H1 (cell line): ENCODE measurements at regions of chr6 and their contacts with region 1.

Region 1: GRCh38 chr6:43211955-43212354 is 17.3 kb downstream of the DNPH1 start:
- DNase-seq: no peak
- H3K4me3 ChIP-seq: no peak overlapping the region
- H3K27ac ChIP-seq: no peak overlapping the region
- H3K4me1 ChIP-seq: no peaks in the 10 kb centered on the region; a peak in 1 of 7 replicates
- H3K27me3 ChIP-seq: no peaks in the 10 kb centered on the region
- CTCF ChIP-seq: peak in 1 of 3 experiments; percentile 43; a peak in 1 of 4 replicates
- EP300 ChIP-seq: no peak
- POLR2A ChIP-seq: no peak
- RAD21 ChIP-seq: peak; percentile 27 to 42; a peak in 2 of 4 replicates

Region 2: DNA sequence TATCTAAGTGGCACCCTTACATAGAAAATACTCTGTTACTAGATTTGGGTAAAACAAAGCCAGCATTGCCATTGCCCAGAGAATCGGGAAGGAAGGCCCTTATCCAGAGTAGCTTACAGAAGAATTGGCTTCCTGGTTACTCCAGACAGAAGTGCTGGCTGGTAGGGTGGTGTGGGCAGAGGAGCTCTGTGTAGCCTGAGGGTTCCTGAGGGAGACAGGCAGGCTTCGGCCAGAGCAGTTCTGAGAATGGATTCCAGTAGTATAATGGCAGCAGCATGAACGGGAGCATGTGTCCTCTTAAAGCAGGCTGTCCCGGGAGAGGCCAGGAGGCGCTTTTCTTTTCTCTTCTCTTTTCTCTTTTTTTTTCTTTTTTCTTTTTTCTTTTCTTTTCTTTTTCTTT is 18.0 kb before region 1 on chr6:
- CTCF ChIA-PET with region 1: interaction called, 10 read pairs
- POLR2A ChIA-PET with region 1: interaction called, 4 read pairs
- DNase-seq: no peak
- H3K4me3 ChIP-seq: no peak overlapping the region
- H3K27ac ChIP-seq: no peak overlapping the region
- H3K4me1 ChIP-seq: no peaks in the 10 kb centered on the region
- H3K27me3 ChIP-seq: no peaks in the 10 kb centered on the region
- CTCF ChIP-seq: no peak
- EP300 ChIP-seq: no peak
- POLR2A ChIP-seq: no peak
- RAD21 ChIP-seq: no peak

Region 3: DNA sequence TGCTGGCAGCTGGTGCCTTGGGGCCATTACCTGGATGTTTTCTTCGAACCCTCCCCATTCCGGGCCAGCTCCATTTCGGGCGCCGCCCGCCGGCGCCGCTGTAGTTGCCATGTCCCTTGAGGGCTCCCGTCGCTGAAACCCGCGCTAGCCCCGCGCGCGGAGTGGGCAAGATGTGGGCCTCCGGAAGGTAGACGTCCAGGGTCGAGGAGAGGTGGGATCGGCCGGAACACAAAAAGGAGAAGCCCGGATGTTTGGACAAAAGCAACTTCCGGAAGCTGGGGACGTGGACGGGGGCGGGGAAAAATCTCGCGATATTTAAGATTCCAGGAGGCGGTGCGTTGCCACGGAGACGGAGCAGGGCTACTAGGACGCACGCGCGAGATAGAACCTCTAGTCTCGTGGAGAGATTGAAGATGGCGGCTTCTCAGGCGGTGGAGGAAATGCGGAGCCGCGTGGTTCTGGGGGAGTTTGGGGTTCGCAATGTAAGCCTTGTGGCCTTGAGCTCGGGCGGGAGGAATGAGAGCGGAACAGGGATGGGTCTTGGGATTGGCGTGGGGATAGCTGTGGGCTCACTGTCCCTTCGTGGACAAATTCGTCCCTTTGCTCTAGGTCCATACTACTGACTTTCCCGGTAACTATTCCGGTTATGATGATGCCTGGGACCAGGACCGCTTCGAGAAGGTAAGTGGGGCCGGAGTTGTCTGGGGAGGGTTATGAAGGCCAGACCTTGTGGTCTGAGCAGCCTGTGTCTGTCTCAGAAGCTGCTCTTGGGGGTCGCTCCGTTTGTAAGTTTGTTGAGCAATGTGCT is 304.9 kb after region 1 on chr6 and contains the starts of genes POLR1C and YIPF3:
- CTCF ChIA-PET with region 1: no interaction called
- POLR2A ChIA-PET with region 1: no interaction called
- DNase-seq: peak; percentile 91 to 95
- H3K4me3 ChIP-seq: peak within 1 kb of the TSS; percentile 86 to 100 (median 96)
- H3K27ac ChIP-seq: peak within 1 kb of the TSS; percentile 82
- H3K4me1 ChIP-seq: peaks cover 4 to 17% (median 8%) of the 10 kb centered on the region in 4 experiments; a peak in 6 of 7 replicates
- H3K27me3 ChIP-seq: no peaks in the 10 kb centered on the region
- CTCF ChIP-seq: no peak
- EP300 ChIP-seq: 0 out of 3 replicates have a peak, but pooled peaks of 1 of the 2 experiments have one; percentile 15
- POLR2A ChIP-seq: peak in 1 of 2 experiments; percentile 89; a peak in 1 of 3 replicates
- RAD21 ChIP-seq: no peak
- total RNA-seq, gene POLR1C: 46.9 and 49.6 TPM in 2 replicates
- total RNA-seq, gene YIPF3: 77.2 and 78.2 TPM in 2 replicates